ENCODE measurements at regions of chr2 and their contacts with region 1.

Region 1: GRCh38 chr2:216222650-216223352 is 113.7 kb downstream of the XRCC5 start:
- DNase-seq: peak; percentile 37
- ATAC-seq: peak; percentile 80
- H3K4me3 Mint-ChIP-seq: peak overlapping the region; percentile 64
- H3K27ac Mint-ChIP-seq: peak overlapping the region; percentile 97
- H3K4me1 Mint-ChIP-seq: peaks cover 25% of the 10 kb centered on the region
- H3K27me3 Mint-ChIP-seq: no peaks in the 10 kb centered on the region
- CTCF ChIP-seq: no peak

Region 2: DNA sequence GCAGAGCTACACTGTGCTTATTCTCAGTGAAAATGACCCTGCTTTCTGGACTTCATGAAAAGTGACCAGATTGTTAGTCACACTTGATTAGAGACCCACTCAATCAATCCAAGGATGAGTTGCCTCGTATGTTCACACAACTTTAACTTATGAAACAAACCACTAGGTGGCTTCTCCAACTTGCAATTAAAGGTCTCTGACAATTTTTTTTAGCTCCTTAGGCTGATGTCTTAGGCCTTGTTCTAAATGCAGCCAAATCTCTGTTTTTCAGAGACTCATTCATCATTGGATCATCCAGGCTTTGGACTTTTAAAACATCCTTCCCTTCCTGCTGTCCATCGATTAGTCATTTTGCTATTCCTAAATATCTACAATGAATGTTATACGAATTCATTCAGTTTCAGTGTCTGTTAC is 272.8 kb before region 1 on chr2:
- CTCF ChIA-PET with region 1: no interaction called
- POLR2A ChIA-PET with region 1: no interaction called
- intact Hi-C with region 1: no loop called
- DNase-seq: no peak
- ATAC-seq: no peak
- H3K4me3 Mint-ChIP-seq: no peak overlapping the region
- H3K27ac Mint-ChIP-seq: no peak overlapping the region
- H3K4me1 Mint-ChIP-seq: no peaks in the 10 kb centered on the region
- H3K27me3 Mint-ChIP-seq: no peaks in the 10 kb centered on the region
- CTCF ChIP-seq: no peak

Region 3: DNA sequence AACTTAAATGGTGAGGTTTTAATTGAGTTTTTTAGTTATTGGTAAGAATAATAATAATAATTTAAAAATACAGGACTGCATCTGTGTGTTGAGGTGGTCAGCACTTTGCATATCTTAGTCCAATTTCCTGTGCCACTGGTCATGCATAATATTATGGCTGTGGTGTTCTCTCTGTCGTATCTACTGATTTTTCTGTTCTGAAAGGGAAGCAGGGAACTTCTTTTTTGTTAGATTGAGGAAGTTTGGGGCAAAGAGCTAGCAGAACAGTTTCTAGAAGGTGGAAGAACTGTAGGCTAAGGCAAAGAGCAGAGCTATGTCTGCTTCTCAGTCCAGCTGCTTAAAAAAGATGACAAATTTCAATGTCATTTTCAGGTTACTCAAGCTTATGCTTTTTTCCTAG is 39.3 kb before region 1 on chr2:
- CTCF ChIA-PET with region 1: no interaction called
- POLR2A ChIA-PET with region 1: no interaction called
- intact Hi-C with region 1: loop called (anchors 1 kb)
- DNase-seq: no peak
- ATAC-seq: peak; percentile 64
- H3K4me3 Mint-ChIP-seq: peak overlapping the region; percentile 58
- H3K27ac Mint-ChIP-seq: peak overlapping the region; percentile 74
- H3K4me1 Mint-ChIP-seq: peaks cover 63% of the 10 kb centered on the region
- H3K27me3 Mint-ChIP-seq: no peaks in the 10 kb centered on the region
- CTCF ChIP-seq: no peak

Region 4: GRCh38 chr2:216283038-216283900 is 60.5 kb after region 1 on chr2:
- CTCF ChIA-PET with region 1: interaction called, 11 read pairs
- POLR2A ChIA-PET with region 1: no interaction called
- intact Hi-C with region 1: loop called (anchors 1 kb)
- DNase-seq: no peak
- ATAC-seq: peak; percentile 68
- H3K4me3 Mint-ChIP-seq: no peak overlapping the region
- H3K27ac Mint-ChIP-seq: no peak overlapping the region
- H3K4me1 Mint-ChIP-seq: no peaks in the 10 kb centered on the region
- H3K27me3 Mint-ChIP-seq: peaks cover 7% of the 10 kb centered on the region
- CTCF ChIP-seq: no peak

Region 5: DNA sequence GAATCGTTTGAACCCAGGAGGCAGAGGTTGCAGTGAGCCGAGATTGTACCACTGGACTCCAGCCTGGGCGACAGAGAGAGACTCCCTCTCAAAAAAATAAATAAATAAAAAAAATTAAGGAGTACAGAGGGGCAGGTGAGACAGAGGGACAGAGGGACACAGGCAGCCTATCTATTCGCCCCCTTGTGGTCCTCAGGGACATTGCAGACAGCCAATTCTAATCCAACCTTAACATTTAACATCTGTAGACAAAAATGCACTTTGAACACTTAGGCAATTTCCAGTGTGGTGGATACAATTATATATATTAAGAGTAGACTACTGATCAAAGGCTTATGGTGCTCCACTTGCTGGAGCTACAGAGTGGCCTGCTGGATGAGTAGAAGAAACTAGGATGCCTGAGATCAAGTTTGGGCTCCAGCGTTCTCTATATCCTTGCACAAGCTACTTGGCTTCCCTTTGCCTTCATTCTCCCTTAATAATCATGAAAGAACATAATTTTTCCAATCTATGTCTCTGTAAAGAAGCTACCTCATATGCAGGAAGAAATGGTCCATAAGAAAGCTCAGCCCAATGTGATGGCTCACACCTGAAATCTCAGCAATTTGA is 181.3 kb after region 1 on chr2:
- CTCF ChIA-PET with region 1: interaction called, 97 read pairs
- POLR2A ChIA-PET with region 1: interaction called, 11 read pairs
- intact Hi-C with region 1: loop called (anchors 1 kb)
- DNase-seq: no peak
- ATAC-seq: peak; percentile 88
- H3K4me3 Mint-ChIP-seq: no peak overlapping the region
- H3K27ac Mint-ChIP-seq: no peak overlapping the region
- H3K4me1 Mint-ChIP-seq: no peaks in the 10 kb centered on the region
- H3K27me3 Mint-ChIP-seq: peaks cover 11% of the 10 kb centered on the region
- CTCF ChIP-seq: no peak

Region 6: DNA sequence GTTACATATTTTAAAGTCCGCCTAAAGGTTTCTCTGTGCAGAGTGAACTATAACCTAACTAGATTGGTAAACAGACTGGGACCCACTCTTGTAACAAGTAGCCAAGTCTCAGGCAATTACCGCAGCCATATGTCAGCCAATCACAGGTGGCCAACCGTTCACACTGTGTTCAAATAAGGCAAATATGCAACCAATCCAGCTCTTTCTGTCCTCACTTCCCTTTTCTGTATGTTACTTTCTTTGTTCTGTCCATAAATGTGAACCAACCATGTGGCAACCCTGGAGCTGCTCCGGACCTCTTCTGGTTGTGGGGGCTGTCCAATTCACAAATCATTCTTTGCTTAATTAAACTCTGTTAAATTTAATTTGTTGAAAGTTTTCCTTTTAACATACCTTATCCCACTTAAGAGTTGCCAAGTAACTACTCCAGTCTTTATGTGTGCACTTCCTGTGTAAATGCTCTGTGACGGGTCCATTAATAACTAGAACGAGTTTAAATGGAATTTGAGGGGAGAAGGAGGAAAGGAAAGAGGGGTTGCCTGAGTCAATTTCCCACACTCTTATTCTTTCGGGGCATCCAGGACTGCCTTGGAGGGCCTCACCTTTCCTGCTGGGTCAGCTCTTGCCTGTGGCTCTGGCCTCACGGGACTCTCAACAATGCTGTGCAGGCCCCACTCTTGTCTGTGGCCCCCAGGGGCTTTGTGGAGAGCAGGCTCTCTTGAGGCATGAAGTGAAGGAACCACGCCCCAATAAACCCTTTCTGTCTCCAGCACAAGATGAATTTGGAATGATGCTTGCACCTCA is 269.2 kb after region 1 on chr2:
- CTCF ChIA-PET with region 1: interaction called, 4 read pairs
- POLR2A ChIA-PET with region 1: interaction called, 27 read pairs
- intact Hi-C with region 1: loop called (anchors 1 kb)
- DNase-seq: peak; percentile 48
- ATAC-seq: peak; percentile 93
- H3K4me3 Mint-ChIP-seq: peak overlapping the region; percentile 56
- H3K27ac Mint-ChIP-seq: peak overlapping the region; percentile 91
- H3K4me1 Mint-ChIP-seq: peaks cover 46% of the 10 kb centered on the region
- H3K27me3 Mint-ChIP-seq: no peaks in the 10 kb centered on the region
- CTCF ChIP-seq: no peak

Region 7: DNA sequence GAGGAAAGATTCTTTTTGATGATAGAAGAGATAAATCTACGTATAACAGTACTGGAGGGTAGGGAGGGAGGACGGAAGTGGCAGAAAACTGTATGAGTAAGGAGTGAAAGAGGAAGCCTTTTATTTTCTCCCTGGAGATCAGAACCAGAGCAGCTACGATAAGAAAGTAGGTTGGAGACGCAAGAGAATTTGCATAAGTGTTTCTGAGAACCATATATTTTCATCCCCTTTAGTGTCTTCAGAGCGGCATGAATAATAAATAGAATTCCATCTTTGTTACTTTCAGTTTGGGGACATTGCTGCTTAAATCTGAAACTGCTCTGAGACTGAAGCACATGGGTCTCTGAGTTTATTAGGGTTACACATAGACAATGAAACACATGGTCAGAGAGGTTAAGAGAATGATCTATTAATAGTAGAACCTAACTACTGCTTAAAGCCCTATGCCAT is 867.2 kb after region 1 on chr2:
- CTCF ChIA-PET with region 1: no interaction called
- POLR2A ChIA-PET with region 1: no interaction called
- intact Hi-C with region 1: loop called (anchors 2 kb)
- DNase-seq: no peak
- ATAC-seq: peak; percentile 91
- H3K4me3 Mint-ChIP-seq: peak overlapping the region; percentile 45
- H3K27ac Mint-ChIP-seq: no peak overlapping the region
- H3K4me1 Mint-ChIP-seq: peaks cover 23% of the 10 kb centered on the region
- H3K27me3 Mint-ChIP-seq: peaks cover 2% of the 10 kb centered on the region
- CTCF ChIP-seq: no peak

Measured in activated B cell treated with CpG ODN at 0.5 μM for 24 hours (primary cell).